Breast epithelium (tissue), 4 donors: ENCODE measurements at regions of chr3 and their contacts with region 1.

Region 1: DNA sequence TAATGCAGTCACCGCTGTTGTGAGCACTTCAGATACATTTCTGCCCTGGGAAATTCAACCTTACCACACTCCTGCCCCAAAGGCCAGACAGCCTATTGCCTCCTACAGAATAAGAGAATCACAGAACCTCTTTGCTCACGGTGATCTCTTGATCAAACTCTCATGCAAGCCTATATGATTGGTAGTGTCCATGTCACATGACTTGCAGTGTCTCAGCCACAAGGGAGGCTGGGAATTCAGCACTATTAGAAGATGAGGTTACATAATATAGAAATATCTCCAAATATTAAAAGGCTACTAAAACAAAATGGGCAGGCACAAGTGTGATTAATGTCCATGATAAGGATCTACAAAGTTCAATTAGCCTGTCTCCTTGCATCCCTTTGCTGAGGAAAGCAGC is 3.8 kb upstream of the PCOLCE2 start:
- DNase-seq: no peak
- H3K4me3 ChIP-seq: no peak overlapping the region
- H3K27ac ChIP-seq: no peak overlapping the region
- H3K4me1 ChIP-seq: peaks cover 0 to 7% of the 10 kb centered on the region in 2 donors
- H3K27me3 ChIP-seq: peaks cover 0 to 12% of the 10 kb centered on the region in 2 donors
- CTCF ChIP-seq: no peak
- POLR2A ChIP-seq: no peak

Region 2: DNA sequence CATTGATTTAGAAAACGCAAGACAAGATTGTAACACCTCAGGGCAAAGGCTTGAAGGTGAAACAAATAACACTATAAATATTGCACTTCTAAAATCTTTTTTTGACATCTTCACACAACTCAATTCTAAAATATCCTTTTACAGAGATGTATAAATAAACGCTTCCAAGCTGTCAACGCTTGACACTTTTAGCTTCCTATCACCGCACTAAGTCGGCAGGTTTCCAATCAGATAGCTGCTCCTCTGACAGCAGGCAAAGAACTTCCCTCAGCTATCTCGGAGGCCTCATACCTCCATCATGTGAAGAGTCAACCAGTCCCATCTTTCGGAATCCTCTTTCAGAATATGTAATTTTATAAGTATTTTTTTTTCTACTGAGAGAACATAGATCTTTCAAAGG is 74.8 kb before region 1 on chr3:
- intact Hi-C with region 1: loop called (anchors 2 kb)
- DNase-seq: no peak
- H3K4me3 ChIP-seq: no peak overlapping the region
- H3K27ac ChIP-seq: no peak overlapping the region
- H3K4me1 ChIP-seq: no peaks in the 10 kb centered on the region
- H3K27me3 ChIP-seq: no peaks in the 10 kb centered on the region
- CTCF ChIP-seq: no peak
- POLR2A ChIP-seq: no peak

Region 3: DNA sequence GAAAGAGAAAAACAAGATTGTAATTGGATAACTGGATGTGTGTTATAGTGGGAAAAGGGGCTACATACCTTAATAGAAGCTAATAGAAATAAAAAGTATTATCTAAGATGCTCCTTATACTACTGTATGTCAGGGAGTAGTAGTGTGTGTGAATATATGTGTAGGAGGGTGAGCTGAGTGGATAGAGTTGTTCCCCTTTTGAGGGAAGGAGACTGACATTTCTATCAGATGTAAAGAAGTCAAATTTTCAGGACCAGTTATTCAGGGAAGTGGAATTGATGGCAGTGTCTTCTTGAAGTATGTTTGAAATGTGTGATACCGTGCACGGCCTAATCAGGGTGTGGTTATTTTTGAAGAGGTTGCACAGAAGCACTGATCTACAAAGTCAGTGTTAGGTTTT is 52.9 kb before region 1 on chr3:
- intact Hi-C with region 1: no loop called
- DNase-seq: no peak
- H3K4me3 ChIP-seq: no peak overlapping the region
- H3K27ac ChIP-seq: no peak overlapping the region
- H3K4me1 ChIP-seq: no peaks in the 10 kb centered on the region
- H3K27me3 ChIP-seq: no peaks in the 10 kb centered on the region
- CTCF ChIP-seq: no peak
- POLR2A ChIP-seq: no peak

Region 4: GRCh38 chr3:143795874-143796273 is 903.2 kb after region 1 on chr3:
- intact Hi-C with region 1: no loop called
- DNase-seq: no peak
- H3K4me3 ChIP-seq: no peak overlapping the region
- H3K27ac ChIP-seq: no peak overlapping the region
- H3K4me1 ChIP-seq: no peaks in the 10 kb centered on the region
- H3K27me3 ChIP-seq: no peaks in the 10 kb centered on the region
- CTCF ChIP-seq: no peak
- POLR2A ChIP-seq: no peak